ENCODE measurements at regions of chr1 and their contacts with region 1.

Region 1: DNA sequence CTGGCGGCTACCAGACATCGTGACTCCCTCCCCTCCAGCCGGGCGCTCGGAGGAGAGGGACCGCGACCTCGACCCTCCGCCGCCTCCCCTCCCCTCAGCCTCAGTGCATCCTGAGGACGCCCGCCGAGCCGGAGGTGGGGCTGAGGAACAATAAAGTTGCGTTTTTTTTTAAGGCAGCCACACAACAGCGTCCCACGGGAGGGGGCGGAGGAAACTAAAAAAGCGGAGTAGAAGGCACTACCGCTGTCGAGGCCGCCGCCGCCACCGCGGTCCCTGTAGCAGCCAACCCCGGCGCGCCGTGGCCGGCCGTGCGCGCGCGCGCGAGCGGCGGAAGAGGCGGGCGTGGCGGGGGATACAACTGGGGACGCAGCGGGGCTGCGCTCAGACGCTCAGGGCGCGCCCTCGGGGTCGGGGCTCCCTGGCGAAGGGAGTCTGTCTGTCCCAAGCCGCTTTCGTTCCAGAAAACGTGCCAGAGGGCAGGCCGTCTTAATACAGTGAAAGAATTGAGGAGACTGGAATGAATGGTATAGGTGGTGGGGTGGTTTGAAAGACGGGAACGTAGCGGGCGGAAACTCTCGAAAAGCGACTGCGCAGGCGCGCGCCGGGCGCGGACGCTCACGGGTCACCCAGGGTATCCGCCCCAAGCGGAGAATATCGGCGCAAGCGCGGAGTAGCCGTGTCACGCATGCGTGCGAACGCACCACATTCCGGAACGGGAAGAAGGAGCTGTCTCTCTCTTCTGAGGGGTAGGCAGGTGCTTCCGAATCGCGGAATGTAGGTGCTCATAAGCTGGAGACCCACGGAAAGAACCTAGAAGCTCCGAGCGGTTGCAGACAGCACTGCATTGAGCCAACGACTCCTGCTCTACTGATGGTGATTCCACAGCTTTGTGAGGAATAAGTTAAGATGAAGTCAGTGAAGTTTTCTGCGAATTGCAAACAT is at the start of gene COP1:
- DNase-seq: peak; percentile 96
- H3K4me3 Mint-ChIP-seq: peak within 1 kb of the TSS; percentile 97
- H3K27ac Mint-ChIP-seq: peak within 1 kb of the TSS; percentile 99
- H3K4me1 Mint-ChIP-seq: peaks cover 29% of the 10 kb centered on the region
- H3K27me3 Mint-ChIP-seq: peaks cover 1% of the 10 kb centered on the region
- total RNA-seq, gene COP1: 49.2 and 51.7 TPM in 2 replicates

Region 2: DNA sequence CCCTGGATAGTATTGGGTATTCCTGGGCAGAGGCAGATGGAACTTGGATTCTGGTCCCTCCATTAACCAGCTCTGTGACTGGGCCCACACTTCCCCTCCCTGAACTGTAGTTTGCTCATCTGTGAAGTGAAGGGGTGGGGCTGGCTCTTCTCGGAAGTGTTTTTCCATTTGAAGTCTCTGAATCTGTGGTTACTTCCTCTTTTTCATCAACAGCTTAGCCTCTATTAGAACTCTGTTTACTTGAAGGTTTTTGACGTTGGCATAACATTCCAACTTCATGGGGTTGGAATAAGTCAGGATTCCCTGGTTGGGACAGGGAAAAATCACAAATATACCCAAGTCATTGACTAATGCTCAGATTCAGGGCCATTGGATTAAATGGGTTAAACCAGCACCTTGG is 1018.3 kb before region 1 on chr1:
- intact Hi-C with region 1: loop called (anchors 2 kb)
- DNase-seq: peak; percentile 60
- H3K4me3 Mint-ChIP-seq: peak overlapping the region; percentile 99
- H3K27ac Mint-ChIP-seq: peak overlapping the region; percentile 84
- H3K4me1 Mint-ChIP-seq: peaks cover 75% of the 10 kb centered on the region
- H3K27me3 Mint-ChIP-seq: no peaks in the 10 kb centered on the region

Region 3: DNA sequence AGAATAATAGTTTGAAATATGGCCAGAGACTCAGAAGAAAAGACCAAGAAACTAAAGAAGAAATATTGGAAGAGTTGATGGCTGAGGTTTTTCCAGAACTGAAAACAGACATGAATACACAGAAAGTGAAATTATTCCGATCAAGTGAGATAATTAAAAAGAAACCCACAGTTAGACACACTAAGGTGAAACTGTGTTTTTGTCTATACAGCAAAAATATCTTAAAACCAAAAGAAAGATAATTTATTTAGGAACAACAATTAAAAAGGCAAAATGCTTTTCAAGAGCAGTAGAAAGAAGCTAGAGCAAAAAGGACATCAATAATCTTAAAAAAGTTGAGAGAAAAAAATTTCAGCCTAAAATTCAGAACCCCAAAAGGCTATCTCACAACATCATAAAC is 116.5 kb before region 1 on chr1:
- intact Hi-C with region 1: no loop called
- DNase-seq: no peak
- H3K4me3 Mint-ChIP-seq: no peak overlapping the region
- H3K27ac Mint-ChIP-seq: no peak overlapping the region
- H3K4me1 Mint-ChIP-seq: peaks cover under 1% of the 10 kb centered on the region
- H3K27me3 Mint-ChIP-seq: no peaks in the 10 kb centered on the region

Region 4: GRCh38 chr1:176119549-176119948 is 87.7 kb before region 1 on chr1:
- intact Hi-C with region 1: loop called (anchors 2 kb)
- DNase-seq: no peak
- H3K4me3 Mint-ChIP-seq: no peak overlapping the region
- H3K27ac Mint-ChIP-seq: no peak overlapping the region
- H3K4me1 Mint-ChIP-seq: no peaks in the 10 kb centered on the region
- H3K27me3 Mint-ChIP-seq: no peaks in the 10 kb centered on the region

Region 5: DNA sequence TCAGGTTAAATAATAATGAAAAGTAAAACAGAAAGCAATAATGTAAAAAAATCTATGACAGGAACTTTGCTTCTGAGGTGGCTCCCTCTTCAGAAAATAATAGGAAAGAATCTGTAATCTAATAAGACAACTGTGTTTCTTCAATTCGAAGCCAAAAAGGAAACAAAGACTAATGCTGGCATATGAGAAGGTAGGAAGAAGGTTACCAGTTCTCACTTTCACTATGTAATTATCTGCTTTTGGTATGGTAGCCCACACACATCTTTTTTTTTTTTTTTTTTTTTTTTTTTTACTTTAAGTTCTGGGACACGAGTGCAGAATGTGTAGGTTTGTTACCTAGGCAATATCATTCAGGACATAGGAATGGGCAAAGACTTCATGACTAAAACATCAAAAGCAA is 47.2 kb before region 1 on chr1:
- intact Hi-C with region 1: loop called (anchors 1 kb)
- DNase-seq: no peak
- H3K4me3 Mint-ChIP-seq: peak overlapping the region; percentile 31
- H3K27ac Mint-ChIP-seq: peak overlapping the region; percentile 90
- H3K4me1 Mint-ChIP-seq: peaks cover 36% of the 10 kb centered on the region
- H3K27me3 Mint-ChIP-seq: no peaks in the 10 kb centered on the region

Region 6: GRCh38 chr1:176177764-176178163 is 29.5 kb before region 1 on chr1:
- intact Hi-C with region 1: loop called (anchors 1 kb)
- DNase-seq: no peak
- H3K4me3 Mint-ChIP-seq: peak overlapping the region; percentile 47
- H3K27ac Mint-ChIP-seq: peak overlapping the region; percentile 85
- H3K4me1 Mint-ChIP-seq: peaks cover 19% of the 10 kb centered on the region
- H3K27me3 Mint-ChIP-seq: no peaks in the 10 kb centered on the region

Region 7: GRCh38 chr1:176193023-176193422 is 14.2 kb before region 1 on chr1:
- intact Hi-C with region 1: loop called (anchors 1 kb)
- DNase-seq: no peak
- H3K4me3 Mint-ChIP-seq: no peak overlapping the region
- H3K27ac Mint-ChIP-seq: no peak overlapping the region
- H3K4me1 Mint-ChIP-seq: peaks cover 53% of the 10 kb centered on the region
- H3K27me3 Mint-ChIP-seq: no peaks in the 10 kb centered on the region